AG04450 (cell line): ENCODE measurements at regions of chr1 and their contacts with region 1.

Region 1: GRCh38 chr1:84060781-84061180 is 61.8 kb upstream of the TTLL7 start:
- DNase-seq: no peak
- H3K4me3 ChIP-seq: no peak overlapping the region
- H3K27ac ChIP-seq: no peak overlapping the region
- H3K27me3 ChIP-seq: no peaks in the 10 kb centered on the region
- CTCF ChIP-seq: no peak

Region 2: DNA sequence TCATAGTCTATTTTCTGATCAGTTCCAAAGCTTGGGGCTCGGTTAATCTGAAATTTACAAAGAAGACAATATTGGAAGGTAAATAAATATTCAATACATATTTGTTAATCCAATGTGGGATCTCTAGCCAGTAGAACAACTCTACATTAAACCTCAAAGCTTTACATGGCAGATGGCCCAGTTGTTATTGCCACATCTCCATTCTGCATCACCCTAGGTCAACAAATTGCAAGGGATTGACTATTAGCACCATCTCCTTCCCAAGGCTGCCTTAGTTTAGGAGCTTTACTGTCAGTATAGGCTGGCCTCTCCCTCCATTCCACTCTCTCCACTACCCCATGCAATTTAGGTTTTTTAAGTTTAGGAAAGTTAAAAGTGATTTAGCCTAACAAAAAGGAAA is 131.6 kb before region 1 on chr1:
- CTCF ChIA-PET with region 1: no interaction called
- POLR2A ChIA-PET with region 1: no interaction called
- DNase-seq: peak; percentile 13
- H3K4me3 ChIP-seq: no peak overlapping the region
- H3K27ac ChIP-seq: no peak overlapping the region
- H3K27me3 ChIP-seq: no peaks in the 10 kb centered on the region
- CTCF ChIP-seq: no peak

Region 3: GRCh38 chr1:84048820-84049219 is 12.0 kb before region 1 on chr1:
- CTCF ChIA-PET with region 1: interaction called, 10 read pairs
- POLR2A ChIA-PET with region 1: no interaction called
- DNase-seq: no peak
- H3K4me3 ChIP-seq: no peak overlapping the region
- H3K27ac ChIP-seq: no peak overlapping the region
- H3K27me3 ChIP-seq: no peaks in the 10 kb centered on the region
- CTCF ChIP-seq: no peak